B cell (primary cell): ENCODE measurements at regions of chr11 and their contacts with region 1.

Region 1: GRCh38 chr11:19053909-19054308 is 6.6 kb downstream of the MRGPRX2 start:
- DNase-seq: no peak
- ATAC-seq: no peak
- H3K4me3 ChIP-seq: no peak overlapping the region
- H3K4me3 Mint-ChIP-seq: no peak overlapping the region
- H3K27ac ChIP-seq: no peak overlapping the region
- H3K27ac Mint-ChIP-seq: no peak overlapping the region
- H3K4me1 ChIP-seq: no peaks in the 10 kb centered on the region
- H3K4me1 Mint-ChIP-seq: no peaks in the 10 kb centered on the region
- H3K27me3 ChIP-seq: no peaks in the 10 kb centered on the region
- H3K27me3 Mint-ChIP-seq: no peaks in the 10 kb centered on the region
- CTCF ChIP-seq: no peak

Region 2: GRCh38 chr11:19071255-19071654 is 17.3 kb after region 1 on chr11:
- CTCF ChIA-PET with region 1: interaction called, 10 read pairs
- POLR2A ChIA-PET with region 1: no interaction called
- intact Hi-C with region 1: no loop called
- DNase-seq: peak; percentile 66
- ATAC-seq: peak; percentile 78
- H3K4me3 ChIP-seq: no peak overlapping the region
- H3K4me3 Mint-ChIP-seq: peak overlapping the region; percentile 23
- H3K27ac ChIP-seq: no peak overlapping the region
- H3K27ac Mint-ChIP-seq: no peak overlapping the region
- H3K4me1 ChIP-seq: peaks cover 0 to 4% of the 10 kb centered on the region in 2 donors
- H3K4me1 Mint-ChIP-seq: peaks cover 5% of the 10 kb centered on the region
- H3K27me3 ChIP-seq: peaks cover 0 to 4% (median 2%) of the 10 kb centered on the region in 4 experiments
- H3K27me3 Mint-ChIP-seq: peaks cover 26% of the 10 kb centered on the region
- CTCF ChIP-seq: peak; percentile 85